ENCODE measurements at regions of chr14 and their contacts with region 1.

Region 1: GRCh38 chr14:73949744-73950734 is at the starts of genes COQ6 and FAM161B:
- DNase-seq: peak; percentile 93 to 95 (median 94)
- H3K4me3 ChIP-seq: peak within 1 kb of the TSS; percentile 63 to 99 (median 76)
- H3K4me3 Mint-ChIP-seq: peak within 1 kb of the TSS; percentile 97
- H3K27ac ChIP-seq: peak within 1 kb of the TSS; percentile 85 to 88
- H3K27ac Mint-ChIP-seq: peak within 1 kb of the TSS; percentile 90 to 98 (median 95)
- H3K4me1 ChIP-seq: peaks cover 14 to 17% of the 10 kb centered on the region in 2 donors
- H3K4me1 Mint-ChIP-seq: peaks cover 17% of the 10 kb centered on the region
- H3K27me3 ChIP-seq: no peaks in the 10 kb centered on the region
- H3K27me3 Mint-ChIP-seq: peaks cover 0 to 4% (median 0%) of the 10 kb centered on the region in 3 donors
- CTCF ChIP-seq: no peak
- polyA plus RNA-seq, gene COQ6: 14.1 to 21.1 (median 14.6) TPM
- polyA plus RNA-seq, gene FAM161B: 0.76 to 1.4 (median 1.4) TPM

Region 2: DNA sequence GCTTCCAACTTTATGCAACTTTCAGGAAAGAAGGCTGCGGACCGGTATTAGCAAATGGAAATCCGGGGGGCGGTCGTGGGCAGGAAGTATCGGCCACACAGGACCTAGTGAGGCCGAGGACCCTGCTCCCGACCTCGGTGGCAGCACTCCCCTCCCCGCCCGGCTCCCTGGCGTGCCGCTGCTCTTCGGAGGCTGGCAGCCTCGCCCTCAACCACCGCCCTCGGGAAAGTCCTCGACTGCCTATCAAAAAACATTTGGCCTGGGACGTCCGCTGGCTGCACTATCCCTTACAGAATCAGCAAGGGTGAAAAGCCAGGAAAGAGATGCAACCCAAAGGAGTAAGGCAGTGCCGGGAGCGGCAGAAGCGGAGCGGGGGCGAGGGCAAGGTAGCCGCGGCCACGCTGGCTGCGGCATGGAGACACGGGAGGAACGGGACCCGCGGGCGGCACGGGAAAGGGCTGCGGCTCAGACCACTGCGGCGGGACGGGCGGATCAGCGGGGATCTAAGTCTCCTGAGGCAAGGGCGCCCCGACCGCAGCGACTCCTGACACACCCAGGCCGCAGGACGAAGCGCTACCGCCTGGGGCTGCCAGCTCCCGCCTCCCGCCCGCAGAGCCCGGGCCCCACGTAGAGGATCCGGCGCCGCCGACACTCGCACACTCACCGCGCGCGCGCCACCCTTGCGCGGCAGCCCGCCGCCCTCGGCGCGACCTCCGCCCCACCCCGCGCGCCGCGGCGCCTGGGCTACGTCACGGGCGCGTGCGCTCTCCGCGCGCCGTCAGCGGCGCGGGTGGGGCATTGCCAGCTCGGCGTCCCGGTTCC is 68.8 kb after region 1 on chr14 and contains the starts of genes BBOF1 and ENTPD5:
- intact Hi-C with region 1: loop called (anchors 5 to 10 kb)
- DNase-seq: peak; percentile 87 to 90 (median 90)
- H3K4me3 ChIP-seq: peak within 1 kb of the TSS; percentile 87 to 95 (median 88)
- H3K4me3 Mint-ChIP-seq: peak within 1 kb of the TSS; percentile 88 to 96
- H3K27ac ChIP-seq: peak within 1 kb of the TSS; percentile 93 to 97
- H3K27ac Mint-ChIP-seq: peak within 1 kb of the TSS; percentile 96 to 98 (median 97)
- H3K4me1 ChIP-seq: peaks cover 11 to 15% of the 10 kb centered on the region in 2 donors
- H3K4me1 Mint-ChIP-seq: peaks cover 13% of the 10 kb centered on the region
- H3K27me3 ChIP-seq: no peaks in the 10 kb centered on the region
- H3K27me3 Mint-ChIP-seq: no peaks in the 10 kb centered on the region
- CTCF ChIP-seq: no peak
- polyA plus RNA-seq, gene BBOF1: 0.01 to 0.94 TPM in 2 of 3 donors, not detected in the other
- polyA plus RNA-seq, gene ENTPD5: 2.3 to 4.3 (median 2.7) TPM